ENCODE measurements at regions of chr10 and their contacts with region 1.

Region 1: GRCh38 chr10:74137992-74138391 is 12.6 kb downstream of the AP3M1 start:
- DNase-seq: peak in 1 of 35 experiments; percentile 11
- ATAC-seq: no peak
- H3K4me3 ChIP-seq: no peak overlapping the region
- H3K4me3 Mint-ChIP-seq: no peak overlapping the region
- H3K27ac ChIP-seq: no peak overlapping the region
- H3K27ac Mint-ChIP-seq: no peak overlapping the region
- H3K4me1 ChIP-seq: no peaks in the 10 kb centered on the region
- H3K4me1 Mint-ChIP-seq: peaks cover 5 to 16% (median 12%) of the 10 kb centered on the region in 3 donors
- H3K27me3 ChIP-seq: no peaks in the 10 kb centered on the region
- H3K27me3 Mint-ChIP-seq: no peaks in the 10 kb centered on the region

Region 2: GRCh38 chr10:73857446-73857845 is 280.5 kb before region 1 on chr10:
- CTCF ChIA-PET with region 1: no interaction called
- POLR2A ChIA-PET with region 1: no interaction called
- DNase-seq: peak in 2 of 35 experiments; percentile 19 to 40
- ATAC-seq: peak in 3 of 4 experiments; percentile 23 to 77 (median 41)
- H3K4me3 ChIP-seq: no peak overlapping the region
- H3K4me3 Mint-ChIP-seq: peak overlapping the region in 2 of 3 donors; percentile 26 to 29
- H3K27ac ChIP-seq: peak overlapping the region; percentile 67
- H3K27ac Mint-ChIP-seq: peak overlapping the region; percentile 76 to 80
- H3K4me1 ChIP-seq: peaks cover 2 to 52% of the 10 kb centered on the region in 2 experiments
- H3K4me1 Mint-ChIP-seq: peaks cover 57 to 72% (median 72%) of the 10 kb centered on the region in 3 donors
- H3K27me3 ChIP-seq: no peaks in the 10 kb centered on the region
- H3K27me3 Mint-ChIP-seq: no peaks in the 10 kb centered on the region

Region 3: GRCh38 chr10:73997787-73998622 is 140.0 kb before region 1 on chr10 and contains the start of gene VCL:
- CTCF ChIA-PET with region 1: no interaction called
- POLR2A ChIA-PET with region 1: interaction called in 1 of 2 experiments, 10 read pairs
- DNase-seq: peak; percentile 88 to 97 (median 95)
- ATAC-seq: peak; percentile 96 to 98 (median 98)
- H3K4me3 ChIP-seq: peak within 1 kb of the TSS; percentile 73 to 89
- H3K4me3 Mint-ChIP-seq: peak within 1 kb of the TSS; percentile 86 to 98 (median 97)
- H3K27ac ChIP-seq: peak within 1 kb of the TSS; percentile 60
- H3K27ac Mint-ChIP-seq: peak within 1 kb of the TSS; percentile 97 to 98
- H3K4me1 ChIP-seq: peaks cover 15 to 23% of the 10 kb centered on the region in 2 experiments
- H3K4me1 Mint-ChIP-seq: peaks cover 43 to 55% (median 46%) of the 10 kb centered on the region in 3 donors
- H3K27me3 ChIP-seq: no peaks in the 10 kb centered on the region
- H3K27me3 Mint-ChIP-seq: no peaks in the 10 kb centered on the region
- total RNA-seq, gene VCL: 22.6 to 48.7 (median 27.0) TPM

Region 4: GRCh38 chr10:74113546-74113945 is 24.4 kb before region 1 on chr10:
- CTCF ChIA-PET with region 1: no interaction called
- POLR2A ChIA-PET with region 1: no interaction called
- DNase-seq: no peak
- ATAC-seq: no peak
- H3K4me3 ChIP-seq: no peak overlapping the region
- H3K4me3 Mint-ChIP-seq: no peak overlapping the region
- H3K27ac ChIP-seq: no peak overlapping the region
- H3K27ac Mint-ChIP-seq: peak overlapping the region in 1 of 2 donors; percentile 44
- H3K4me1 ChIP-seq: no peaks in the 10 kb centered on the region
- H3K4me1 Mint-ChIP-seq: peaks cover 2 to 6% (median 6%) of the 10 kb centered on the region in 3 donors
- H3K27me3 ChIP-seq: no peaks in the 10 kb centered on the region
- H3K27me3 Mint-ChIP-seq: no peaks in the 10 kb centered on the region

Measured in T-cell (primary cell).